Activated T-helper 2 cell treated with anti-CD3 and anti-CD28 coated beads, Interferon-gamma antibody, Interleukin-2, Interleukin-4, amounts not matched to agents 10 μg/mL and 5 μg/mL and 100 μg/mL, durations not matched to agents 14 hours and 24 hours and 36 hours (primary cell): ENCODE measurements at regions of chr3 and their contacts with region 1.

Region 1: GRCh38 chr3:122365073-122365472 is 18.0 kb downstream of the MIX23 start:
- DNase-seq: no peak
- H3K4me3 Mint-ChIP-seq: peak overlapping the region; percentile 14
- H3K27ac Mint-ChIP-seq: peak overlapping the region; percentile 92
- H3K4me1 Mint-ChIP-seq: peaks cover 41% of the 10 kb centered on the region
- H3K27me3 Mint-ChIP-seq: no peaks in the 10 kb centered on the region

Region 2: DNA sequence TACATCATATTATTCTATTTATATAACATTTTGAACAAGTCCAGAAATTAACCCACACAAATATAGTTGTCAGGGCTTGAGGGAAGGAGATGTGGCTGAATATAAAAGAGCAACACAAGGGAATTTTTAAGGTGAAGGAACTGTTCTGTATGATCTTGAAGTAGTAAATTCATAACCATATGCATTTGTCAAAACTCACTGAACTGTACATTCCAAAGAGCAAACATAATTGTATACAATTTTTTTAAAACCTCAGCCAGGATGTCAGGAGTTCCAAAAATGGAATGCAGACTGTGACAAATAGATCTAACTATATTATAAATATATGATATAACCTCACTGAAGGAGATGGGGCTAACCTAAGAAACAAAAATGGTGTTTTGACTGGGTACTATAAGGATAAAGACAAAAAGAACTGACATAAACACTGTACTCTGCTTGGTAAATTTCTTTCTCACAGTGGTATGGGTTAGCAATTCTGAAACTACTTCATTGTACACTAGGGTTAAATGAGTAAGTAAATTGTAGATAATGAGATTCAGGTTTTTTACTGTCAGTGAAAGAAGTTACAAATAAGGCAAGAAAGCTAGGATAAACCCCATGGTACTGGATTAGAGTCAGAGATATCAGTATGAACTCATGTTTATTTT is 629.9 kb before region 1 on chr3:
- intact Hi-C with region 1: loop called (anchors 5 kb)
- DNase-seq: no peak
- H3K4me3 Mint-ChIP-seq: no peak overlapping the region
- H3K27ac Mint-ChIP-seq: no peak overlapping the region
- H3K4me1 Mint-ChIP-seq: peaks cover 35% of the 10 kb centered on the region
- H3K27me3 Mint-ChIP-seq: no peaks in the 10 kb centered on the region

Region 3: DNA sequence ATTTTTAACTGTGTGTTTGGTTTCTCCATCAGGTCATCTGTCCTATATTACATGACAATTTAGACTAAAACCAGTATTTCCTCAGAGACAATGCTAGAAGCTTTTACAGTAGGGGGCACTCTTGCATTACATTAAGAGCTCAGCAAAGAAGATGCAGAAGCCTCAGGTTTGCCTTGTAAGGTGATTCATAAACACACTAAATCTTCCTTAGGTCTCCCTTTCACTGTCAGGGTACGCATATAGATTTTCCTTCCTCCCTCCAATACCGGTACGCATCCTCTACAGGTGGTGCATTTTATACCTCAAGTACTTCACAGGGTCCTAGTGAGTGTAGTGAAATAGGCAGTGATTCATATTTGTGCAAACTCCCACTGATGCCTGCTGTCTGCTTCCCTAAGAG is 263.4 kb before region 1 on chr3:
- intact Hi-C with region 1: loop called (anchors 2 kb)
- DNase-seq: no peak
- H3K4me3 Mint-ChIP-seq: no peak overlapping the region
- H3K27ac Mint-ChIP-seq: peak overlapping the region; percentile 62
- H3K4me1 Mint-ChIP-seq: peaks cover 38% of the 10 kb centered on the region
- H3K27me3 Mint-ChIP-seq: no peaks in the 10 kb centered on the region

Region 4: GRCh38 chr3:122299872-122300460 is 65.1 kb before region 1 on chr3:
- intact Hi-C with region 1: loop called (anchors 1 kb)
- DNase-seq: no peak
- H3K4me3 Mint-ChIP-seq: no peak overlapping the region
- H3K27ac Mint-ChIP-seq: no peak overlapping the region
- H3K4me1 Mint-ChIP-seq: peaks cover 24% of the 10 kb centered on the region
- H3K27me3 Mint-ChIP-seq: peaks cover 1% of the 10 kb centered on the region

Region 5: GRCh38 chr3:122383771-122384697 is 19.0 kb after region 1 on chr3 and contains the start of gene FAM162A:
- intact Hi-C with region 1: loop called (anchors 1 kb)
- DNase-seq: peak; percentile 92
- H3K4me3 Mint-ChIP-seq: peak within 1 kb of the TSS; percentile 90
- H3K27ac Mint-ChIP-seq: peak within 1 kb of the TSS; percentile 94
- H3K4me1 Mint-ChIP-seq: peaks cover 62% of the 10 kb centered on the region
- H3K27me3 Mint-ChIP-seq: no peaks in the 10 kb centered on the region
- total RNA-seq, gene FAM162A: 82.2 and 85.8 TPM in 2 replicates

Region 6: DNA sequence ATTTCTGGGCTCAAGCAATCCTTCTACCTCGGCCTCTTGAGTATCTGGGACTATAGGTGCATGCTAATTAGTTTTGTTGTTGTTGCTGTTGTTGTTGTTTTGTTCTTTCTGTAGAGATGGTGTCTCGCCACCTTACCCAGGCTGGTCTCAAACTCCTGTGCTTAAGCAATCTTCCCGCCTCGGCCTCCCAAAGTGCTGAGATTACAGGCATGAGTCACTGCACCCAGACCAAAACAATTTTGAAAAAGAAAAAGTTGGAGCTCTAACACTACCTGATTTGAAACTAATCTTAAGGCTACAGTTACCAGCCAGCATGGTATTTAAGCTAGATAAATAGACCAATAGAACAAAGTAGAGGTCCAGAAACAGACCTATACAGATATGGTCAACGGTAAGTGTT is 119.9 kb after region 1 on chr3:
- intact Hi-C with region 1: loop called (anchors 1 kb)
- DNase-seq: no peak
- H3K4me3 Mint-ChIP-seq: no peak overlapping the region
- H3K27ac Mint-ChIP-seq: no peak overlapping the region
- H3K4me1 Mint-ChIP-seq: peaks cover 43% of the 10 kb centered on the region
- H3K27me3 Mint-ChIP-seq: no peaks in the 10 kb centered on the region